AG04449 (cell line): ENCODE measurements at regions of chr17 and their contacts with region 1.

Region 1: DNA sequence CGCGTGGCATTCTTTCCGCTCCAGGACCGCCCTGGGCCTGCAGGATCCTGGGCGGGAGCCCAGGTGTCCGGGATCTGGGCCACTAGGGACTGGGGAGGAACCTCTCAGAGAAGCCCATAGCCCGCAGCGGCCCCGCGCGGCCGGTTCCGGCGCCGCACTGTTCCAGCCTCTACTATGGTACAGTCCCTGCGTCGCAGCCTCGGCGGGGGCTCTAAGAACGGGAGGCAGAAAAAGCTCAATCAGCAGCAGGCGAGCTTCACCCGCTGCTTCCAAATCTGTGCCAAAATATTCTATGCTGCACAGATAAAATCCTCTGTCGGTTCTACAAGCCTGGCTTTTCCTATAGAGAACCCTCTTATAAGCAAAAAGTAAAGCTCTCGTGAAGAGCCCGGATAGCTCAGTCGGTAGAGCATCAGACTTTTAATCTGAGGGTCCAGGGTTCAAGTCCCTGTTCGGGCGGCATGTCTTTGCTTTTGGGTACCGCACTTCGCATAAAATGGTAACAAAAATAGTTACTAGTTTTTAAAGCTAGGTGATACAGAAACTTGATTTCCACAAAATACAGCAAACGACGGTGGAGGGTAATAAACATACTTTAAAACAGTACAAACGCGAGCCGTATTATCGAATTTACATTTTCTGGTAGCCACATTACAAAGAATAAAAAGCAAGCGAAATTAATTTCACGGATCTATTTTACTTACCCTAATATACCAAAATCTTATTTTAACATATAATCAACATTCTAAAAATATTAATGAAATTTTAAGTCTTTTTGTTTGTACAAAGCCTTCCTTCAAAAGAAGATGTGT is 661 bp upstream of the ALOXE3 start:
- DNase-seq: no peak
- H3K4me3 ChIP-seq: peak overlapping the region; percentile 73
- CTCF ChIP-seq: peak; percentile 93

Region 2: GRCh38 chr17:8041249-8041928 is 77.6 kb before region 1 on chr17:
- CTCF ChIA-PET with region 1: interaction called, 10 read pairs
- POLR2A ChIA-PET with region 1: no interaction called
- DNase-seq: no peak
- H3K4me3 ChIP-seq: no peak overlapping the region
- CTCF ChIP-seq: peak; percentile 33

Region 3: DNA sequence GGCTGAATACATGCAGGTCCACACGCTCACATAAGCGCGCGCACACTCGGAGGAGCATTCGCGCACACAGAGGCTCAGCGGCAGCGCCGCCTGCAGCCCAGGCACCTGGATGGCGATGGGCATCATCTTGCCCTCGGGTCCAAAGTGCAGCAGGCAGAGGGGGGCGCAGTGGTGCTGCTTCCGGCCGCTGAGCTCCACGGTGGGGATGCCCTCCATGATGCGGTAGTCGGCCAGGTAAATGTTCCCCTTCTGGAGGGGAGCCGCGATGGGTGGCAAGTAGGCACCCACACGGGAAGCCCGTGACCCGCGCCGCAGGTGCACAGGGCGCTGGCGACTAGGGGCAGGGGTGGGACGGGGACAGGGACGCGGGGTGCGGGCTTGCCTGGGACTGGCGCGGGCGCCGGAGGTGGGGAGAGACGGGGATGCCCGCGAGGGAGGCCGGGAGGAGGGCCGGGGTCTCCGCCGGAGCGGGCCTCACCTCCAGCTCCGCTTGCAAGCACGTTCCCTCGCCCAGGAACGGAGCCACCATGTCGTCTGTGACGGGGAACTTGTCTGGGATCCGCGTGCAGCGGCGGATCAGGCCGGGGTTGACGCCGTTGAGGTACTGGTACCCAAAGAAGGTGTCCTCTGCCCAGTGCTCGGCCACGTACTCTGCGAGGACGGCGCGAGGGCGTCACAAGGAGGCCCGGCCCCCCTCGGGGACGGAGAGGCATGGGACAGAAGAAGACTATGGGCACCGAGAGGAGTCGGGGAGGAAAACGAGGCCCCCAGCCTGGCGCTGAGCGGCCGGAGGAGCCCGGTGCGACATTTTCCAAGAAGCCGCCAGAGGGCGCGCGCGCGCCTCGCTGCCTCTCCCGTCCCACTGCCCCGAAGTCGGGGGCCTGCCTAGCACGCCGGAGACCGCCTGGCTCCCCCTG is 39.4 kb before region 1 on chr17:
- CTCF ChIA-PET with region 1: interaction called, 168 read pairs
- POLR2A ChIA-PET with region 1: no interaction called
- DNase-seq: no peak
- H3K4me3 ChIP-seq: peak overlapping the region; percentile 55
- CTCF ChIP-seq: peak; percentile 88

Region 4: GRCh38 chr17:8103549-8103948 is 15.4 kb before region 1 on chr17:
- CTCF ChIA-PET with region 1: interaction called, 69 read pairs
- POLR2A ChIA-PET with region 1: no interaction called
- DNase-seq: no peak
- H3K4me3 ChIP-seq: no peak overlapping the region
- CTCF ChIP-seq: no peak

Region 5: DNA sequence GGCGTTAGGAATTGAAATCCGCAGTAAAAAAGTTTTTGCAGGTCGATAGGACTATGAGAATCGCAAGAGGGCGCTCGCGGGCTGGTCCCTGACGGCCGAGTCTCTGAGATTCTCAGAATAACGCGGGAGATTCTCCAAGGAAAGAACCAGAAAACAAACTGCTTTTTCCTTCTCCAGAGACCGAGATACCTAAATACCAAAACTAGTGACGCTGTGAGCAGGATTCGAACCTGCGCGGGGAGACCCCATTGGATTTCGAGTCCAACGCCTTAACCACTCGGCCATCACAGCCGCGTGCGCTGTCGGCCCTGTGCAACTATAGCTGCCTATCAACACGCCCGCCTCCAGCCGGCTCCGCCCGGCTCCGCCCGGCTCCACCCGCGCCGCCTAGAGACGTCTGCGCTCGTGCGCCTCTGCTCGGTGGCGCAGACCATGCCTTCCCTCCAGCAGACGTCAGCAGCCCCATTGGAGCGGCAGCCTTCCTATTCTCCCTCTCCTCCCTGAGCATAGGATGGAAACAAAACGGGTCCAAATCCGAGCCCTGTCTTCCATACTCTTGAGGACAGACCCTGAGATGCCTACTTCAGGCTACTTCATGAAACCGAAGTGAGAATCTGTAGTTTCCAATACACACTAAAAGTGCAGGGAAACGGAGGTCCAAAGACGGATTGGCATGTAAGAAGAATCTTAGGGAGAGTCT is 19.8 kb after region 1 on chr17:
- CTCF ChIA-PET with region 1: interaction called, 37 read pairs
- POLR2A ChIA-PET with region 1: no interaction called
- DNase-seq: peak; percentile 85
- H3K4me3 ChIP-seq: peak overlapping the region; percentile 65
- CTCF ChIP-seq: peak; percentile 79

Region 6: DNA sequence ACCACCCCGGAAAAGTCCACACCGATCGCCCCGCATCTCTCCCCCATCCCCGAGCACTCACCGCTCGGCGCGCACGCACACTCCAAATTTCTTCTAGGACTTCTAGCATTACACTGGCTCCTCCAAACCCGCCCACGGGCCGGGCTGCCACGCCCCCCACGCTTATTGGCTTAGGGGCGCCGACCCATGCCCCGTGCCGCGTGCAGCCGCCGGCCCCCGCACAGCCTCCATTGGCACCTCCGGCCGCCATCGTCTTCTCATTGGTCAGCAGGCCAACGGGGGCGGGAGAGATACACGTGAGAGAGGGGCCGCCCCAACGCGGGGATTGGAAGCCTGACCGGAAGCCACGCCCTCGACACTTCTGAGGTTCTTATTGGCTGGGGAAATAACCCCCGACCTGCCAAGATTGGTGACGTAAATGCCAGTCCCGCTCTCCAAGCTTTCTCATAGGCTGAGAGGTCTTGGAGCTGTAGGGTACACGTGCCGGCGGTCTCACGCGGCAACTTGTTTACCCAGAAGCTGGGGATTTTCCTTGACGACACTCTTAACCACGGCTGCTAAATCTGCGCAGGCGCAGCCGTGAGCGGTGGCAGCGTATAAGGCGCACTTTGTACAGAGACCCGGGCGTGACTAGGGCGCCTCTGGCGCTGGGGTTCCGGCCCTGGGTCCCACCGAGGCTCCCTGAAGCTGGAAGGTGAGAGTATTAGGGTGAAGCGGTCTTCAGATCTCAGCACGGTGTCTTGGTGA is 37.4 kb after region 1 on chr17:
- CTCF ChIA-PET with region 1: interaction called, 41 read pairs
- POLR2A ChIA-PET with region 1: interaction called, 8 read pairs
- DNase-seq: peak; percentile 100
- H3K4me3 ChIP-seq: peak overlapping the region; percentile 70
- CTCF ChIP-seq: no peak

Region 7: GRCh38 chr17:8189711-8190477 is 70.9 kb after region 1 on chr17 and contains the start of gene BORCS6:
- CTCF ChIA-PET with region 1: interaction called, 14 read pairs
- POLR2A ChIA-PET with region 1: interaction called, 6 read pairs
- DNase-seq: peak; percentile 93
- H3K4me3 ChIP-seq: peak within 1 kb of the TSS; percentile 79
- CTCF ChIP-seq: no peak

Region 8: GRCh38 chr17:8234361-8235270 is 115.6 kb after region 1 on chr17:
- CTCF ChIA-PET with region 1: no interaction called
- POLR2A ChIA-PET with region 1: no interaction called
- DNase-seq: no peak
- H3K4me3 ChIP-seq: no peak overlapping the region
- CTCF ChIP-seq: no peak